ENCODE measurements at regions of chr12 and their contacts with region 1.

Region 1: DNA sequence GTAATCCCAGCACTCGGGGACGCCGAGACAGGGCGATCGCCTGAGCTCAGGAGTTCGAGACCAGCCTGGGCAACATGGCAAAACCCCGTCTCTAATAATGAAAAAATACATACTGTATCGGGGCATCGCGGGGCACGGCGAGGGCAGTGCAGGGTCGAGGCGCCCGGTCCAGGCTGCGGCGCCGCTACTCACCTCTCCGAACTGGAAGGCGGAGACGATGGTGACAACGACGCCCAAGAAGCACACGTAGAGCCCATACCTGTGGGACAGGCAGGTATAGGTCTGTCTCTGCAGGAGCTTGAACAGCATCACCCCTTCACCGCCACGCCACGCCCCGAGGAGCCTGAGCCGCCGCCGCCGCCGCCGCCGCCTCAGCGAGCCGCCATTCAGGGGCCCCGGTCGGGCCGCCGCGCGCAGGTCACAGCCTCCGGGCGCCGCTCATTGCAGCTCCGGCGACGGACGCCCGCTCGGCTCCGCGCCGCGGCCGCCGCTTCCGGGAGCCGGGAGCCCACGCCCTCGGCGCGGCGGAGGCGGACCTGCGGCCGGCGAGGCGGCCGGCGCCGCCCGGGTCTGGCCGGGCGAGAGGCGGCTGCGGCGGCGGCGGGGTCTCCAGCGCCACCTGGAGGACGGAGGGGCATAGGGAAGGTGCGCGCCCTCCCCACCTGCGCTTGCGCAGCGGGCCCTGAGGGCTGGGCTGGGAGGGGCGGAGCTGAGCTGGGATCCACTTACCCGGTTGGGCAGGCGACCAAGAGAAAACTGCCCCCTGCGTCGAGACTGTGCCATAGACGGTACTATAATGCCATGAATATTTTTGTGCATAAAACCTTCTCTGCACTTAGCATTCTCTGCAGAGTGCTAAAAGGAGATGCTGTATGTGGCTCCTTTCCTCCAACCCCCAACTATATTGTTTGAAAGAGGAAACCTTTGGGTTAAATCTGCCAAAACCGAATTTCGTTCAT is at the start of gene GNPTAB:
- DNase-seq: peak; percentile 96
- CTCF ChIP-seq: peak; percentile 89

Region 2: GRCh38 chr12:101759396-101760047 is 71.1 kb before region 1 on chr12:
- CTCF ChIA-PET with region 1: interaction called, 12 read pairs
- POLR2A ChIA-PET with region 1: no interaction called
- DNase-seq: peak; percentile 44
- CTCF ChIP-seq: peak; percentile 71

Region 3: GRCh38 chr12:101782273-101782731 is 48.3 kb before region 1 on chr12:
- CTCF ChIA-PET with region 1: interaction called, 76 read pairs
- POLR2A ChIA-PET with region 1: interaction called, 3 read pairs
- DNase-seq: no peak
- CTCF ChIP-seq: no peak

Region 4: DNA sequence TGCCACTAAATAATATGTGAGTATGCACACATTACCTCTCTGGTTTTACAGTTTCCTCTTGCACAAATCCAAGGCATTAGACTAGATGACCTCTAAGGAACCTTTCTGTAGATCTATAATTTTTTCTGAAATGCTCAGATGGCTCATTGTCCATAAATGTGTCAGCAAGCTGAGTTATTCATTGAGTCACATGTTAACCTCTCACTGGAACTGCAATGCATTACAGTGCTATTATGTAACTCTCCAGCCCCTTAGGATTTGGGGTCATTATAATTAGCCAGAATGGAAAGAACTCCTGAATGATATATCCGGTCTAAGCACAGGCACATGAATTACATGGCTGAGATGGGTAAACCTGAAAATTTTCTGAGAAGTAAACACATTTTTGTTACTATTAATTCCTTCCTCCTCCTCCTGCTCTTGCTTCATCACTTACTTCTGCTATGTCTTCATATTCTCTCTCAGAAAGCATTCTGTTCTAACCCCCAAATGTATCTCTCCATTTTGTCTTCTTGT is 26.5 kb after region 1 on chr12:
- CTCF ChIA-PET with region 1: interaction called, 262 read pairs
- POLR2A ChIA-PET with region 1: interaction called, 3 read pairs
- DNase-seq: peak; percentile 20
- CTCF ChIP-seq: no peak

Measured in GM10248 (cell line).